ENCODE measurements at regions of chr22 and their contacts with region 1.

Region 1: DNA sequence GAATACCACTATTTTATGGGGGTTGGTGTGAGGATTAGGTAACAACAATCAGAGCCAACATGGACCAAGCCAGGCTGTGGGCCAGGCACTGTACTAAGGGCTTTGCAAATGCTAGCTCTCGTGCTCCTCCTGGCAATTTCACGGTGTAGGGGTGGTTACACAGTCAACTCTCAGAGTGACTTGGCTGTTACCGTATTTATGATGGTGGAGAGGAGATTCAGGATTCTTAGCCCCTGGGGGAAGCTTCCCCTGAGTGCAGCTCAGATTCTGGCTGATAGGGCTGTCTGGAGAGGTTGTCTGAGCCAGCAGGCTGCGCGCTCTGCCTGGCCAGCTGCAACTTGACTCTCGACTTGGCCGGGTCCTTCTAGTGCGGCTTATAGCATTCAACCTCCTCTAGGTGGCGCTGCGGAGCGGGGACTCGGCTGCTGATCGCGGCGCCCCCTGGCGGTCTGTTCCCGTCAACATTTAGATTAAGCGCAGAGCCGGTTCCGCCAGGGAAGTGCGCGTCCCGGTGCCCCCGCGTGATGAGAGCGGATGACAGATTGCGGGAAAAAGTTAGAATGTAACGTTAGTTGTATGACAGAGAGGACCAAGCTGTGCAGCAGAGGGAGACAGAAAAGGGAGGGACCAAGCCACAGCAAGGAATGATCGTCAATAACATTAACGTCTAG is 4.5 kb upstream of the NCF4 start:
- DNase-seq: peak; percentile 94
- H3K4me3 ChIP-seq: no peak overlapping the region
- H3K27ac ChIP-seq: no peak overlapping the region
- H3K4me1 ChIP-seq: peaks cover 0 to 18% (median 14%) of the 10 kb centered on the region in 4 donors
- H3K27me3 ChIP-seq: peaks cover 0 to 38% (median 0%) of the 10 kb centered on the region in 4 donors
- CTCF ChIP-seq: peak; percentile 99
- EP300 ChIP-seq: no peak
- POLR2A ChIP-seq: no peak

Region 2: DNA sequence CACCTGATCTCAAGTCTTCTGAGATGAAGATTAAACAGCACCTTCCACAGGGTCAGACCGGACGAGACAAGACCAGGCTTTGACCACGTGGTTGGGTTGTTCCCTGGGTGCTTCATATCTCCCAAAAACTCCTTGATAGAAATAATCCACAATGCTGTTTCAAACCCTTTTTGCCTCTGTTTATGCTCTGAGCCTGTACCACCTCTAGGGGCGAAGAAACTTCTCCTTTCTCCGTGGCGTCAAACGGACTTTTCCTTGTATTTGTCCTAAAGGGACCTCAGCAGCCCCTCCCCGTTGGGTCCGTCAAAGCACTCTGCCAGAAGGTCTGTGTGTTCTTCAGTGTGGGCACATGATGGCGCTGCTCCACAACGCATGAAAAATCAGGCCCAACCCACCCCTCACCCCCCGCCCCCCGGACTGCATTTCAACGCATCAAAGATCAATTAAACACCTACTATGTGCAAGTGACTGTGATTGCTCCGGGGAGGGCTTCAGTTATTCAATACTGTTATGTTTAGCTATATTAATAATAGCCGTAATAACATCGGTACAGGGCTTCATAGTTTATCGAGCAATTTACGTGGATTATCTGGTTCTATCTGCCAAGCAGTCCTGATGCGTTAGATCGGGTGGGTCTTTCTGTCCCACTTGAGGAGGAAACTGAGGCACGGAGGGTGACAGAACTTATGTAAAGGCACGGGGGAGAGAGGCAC is 310.0 kb before region 1 on chr22:
- intact Hi-C with region 1: loop called (anchors 5 kb)
- DNase-seq: no peak
- H3K4me3 ChIP-seq: no peak overlapping the region
- H3K27ac ChIP-seq: no peak overlapping the region
- H3K4me1 ChIP-seq: no peaks in the 10 kb centered on the region
- H3K27me3 ChIP-seq: peaks cover 0 to 56% (median 5%) of the 10 kb centered on the region in 4 donors
- CTCF ChIP-seq: peak; percentile 30 to 56 (median 48)
- EP300 ChIP-seq: no peak
- POLR2A ChIP-seq: no peak

Region 3: GRCh38 chr22:36781656-36782627 is 74.3 kb before region 1 on chr22:
- intact Hi-C with region 1: loop called (anchors 2 kb)
- DNase-seq: peak; percentile 95
- H3K4me3 ChIP-seq: no peak overlapping the region
- H3K27ac ChIP-seq: peak overlapping the region; percentile 36 to 69 (median 44)
- H3K4me1 ChIP-seq: peaks cover 4 to 14% (median 11%) of the 10 kb centered on the region in 4 donors
- H3K27me3 ChIP-seq: peaks cover 0 to 3% (median 0%) of the 10 kb centered on the region in 4 donors
- CTCF ChIP-seq: peak in 2 of 3 experiments; percentile 88 to 93
- EP300 ChIP-seq: no peak
- POLR2A ChIP-seq: no peak

Region 4: GRCh38 chr22:36839356-36840073 is 16.7 kb before region 1 on chr22:
- intact Hi-C with region 1: no loop called
- DNase-seq: no peak
- H3K4me3 ChIP-seq: no peak overlapping the region
- H3K27ac ChIP-seq: no peak overlapping the region
- H3K4me1 ChIP-seq: no peaks in the 10 kb centered on the region
- H3K27me3 ChIP-seq: peaks cover 0 to 41% (median 0%) of the 10 kb centered on the region in 4 donors
- CTCF ChIP-seq: no peak
- EP300 ChIP-seq: no peak
- POLR2A ChIP-seq: no peak

Region 5: GRCh38 chr22:36977947-36978660 is 121.8 kb after region 1 on chr22:
- intact Hi-C with region 1: loop called (anchors 5 kb)
- DNase-seq: peak; percentile 95
- H3K4me3 ChIP-seq: peak overlapping the region; percentile 46 to 52 (median 50)
- H3K27ac ChIP-seq: no peak overlapping the region
- H3K4me1 ChIP-seq: peaks cover 6 to 11% (median 8%) of the 10 kb centered on the region in 4 donors
- H3K27me3 ChIP-seq: peaks cover 0 to 23% (median 0%) of the 10 kb centered on the region in 4 donors
- CTCF ChIP-seq: peak; percentile 96 to 98 (median 98)
- EP300 ChIP-seq: no peak
- POLR2A ChIP-seq: no peak